Panc1 (cell line): ENCODE measurements at regions of chr11 and their contacts with region 1.

Region 1: GRCh38 chr11:122424636-122425035 is 230.9 kb upstream of the UBASH3B start:
- DNase-seq: no peak
- ATAC-seq: no peak
- H3K4me3 ChIP-seq: no peak overlapping the region
- H3K27ac ChIP-seq: no peak overlapping the region
- H3K4me1 ChIP-seq: no peaks in the 10 kb centered on the region
- H3K27me3 ChIP-seq: peaks cover 10% of the 10 kb centered on the region
- CTCF ChIP-seq: no peak

Region 2: DNA sequence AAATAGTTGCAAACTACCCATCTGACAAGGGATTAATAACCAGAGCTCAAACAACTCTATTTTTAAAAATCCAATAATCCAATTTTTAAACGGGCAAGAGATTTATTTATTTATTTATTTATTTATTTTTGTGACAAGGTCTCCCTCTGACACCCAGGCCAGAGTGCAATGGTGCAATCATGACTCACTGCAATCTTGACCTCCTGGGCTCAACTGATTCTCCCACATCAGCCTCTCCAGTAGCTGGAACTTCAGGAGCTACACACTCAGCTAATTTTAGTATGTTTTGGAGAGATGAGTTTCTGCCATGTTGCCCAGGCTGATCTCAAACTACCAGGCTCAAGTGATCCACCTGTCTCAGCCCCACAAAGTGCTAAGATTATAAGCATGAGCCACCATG is 41.5 kb before region 1 on chr11:
- CTCF ChIA-PET with region 1: no interaction called
- POLR2A ChIA-PET with region 1: interaction called, 14 read pairs
- in situ Hi-C with region 1: no loop called
- intact Hi-C with region 1: no loop called
- DNase-seq: no peak
- ATAC-seq: no peak
- H3K4me3 ChIP-seq: no peak overlapping the region
- H3K27ac ChIP-seq: no peak overlapping the region
- H3K4me1 ChIP-seq: no peaks in the 10 kb centered on the region
- H3K27me3 ChIP-seq: no peaks in the 10 kb centered on the region
- CTCF ChIP-seq: no peak